Transverse colon (tissue), 4 donors: ENCODE measurements at regions of chr19 and their contacts with region 1.

Region 1: DNA sequence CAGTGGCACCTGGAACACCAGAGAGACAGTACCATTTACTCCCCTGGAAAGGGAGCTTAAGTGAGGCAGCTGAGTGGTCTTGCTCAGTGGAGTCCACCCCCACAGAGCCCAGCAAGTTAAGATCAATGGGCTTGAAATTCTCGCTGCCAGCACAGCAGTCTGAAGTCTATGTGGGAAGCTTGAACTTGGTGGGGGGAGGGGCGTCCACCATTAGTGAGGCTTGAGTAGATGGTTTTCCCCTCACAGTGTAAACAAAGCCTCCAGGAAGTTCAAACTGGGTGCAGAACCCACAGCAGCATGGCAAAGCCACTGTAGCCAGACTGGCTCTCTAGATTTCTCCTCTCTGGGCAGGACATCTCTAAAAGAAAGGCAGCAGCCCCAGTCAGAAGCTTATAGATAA is 30.3 kb upstream of the CEACAM4 start:
- DNase-seq: no peak
- H3K4me3 ChIP-seq: no peak overlapping the region
- H3K27ac ChIP-seq: no peak overlapping the region
- H3K4me1 ChIP-seq: no peaks in the 10 kb centered on the region
- H3K27me3 ChIP-seq: peaks cover 69% of the 10 kb centered on the region
- CTCF ChIP-seq: no peak
- EP300 ChIP-seq: no peak
- POLR2A ChIP-seq: no peak

Region 2: GRCh38 chr19:41626877-41627276 is 30.3 kb before region 1 on chr19 and contains the start of gene CEACAM4:
- in situ Hi-C with region 1: no loop called
- intact Hi-C with region 1: no loop called
- DNase-seq: no peak
- H3K4me3 ChIP-seq: peak within 1 kb of the TSS in 1 of 4 donors; percentile 13
- H3K27ac ChIP-seq: no peak within 1 kb of the TSS
- H3K4me1 ChIP-seq: no peaks in the 10 kb centered on the region
- H3K27me3 ChIP-seq: peaks cover 21% of the 10 kb centered on the region
- CTCF ChIP-seq: no peak
- EP300 ChIP-seq: no peak
- POLR2A ChIP-seq: peak; percentile 29
- total RNA-seq, gene CEACAM4: 0.48 to 1.5 TPM in 2 of 4 donors, not detected in the others

Region 3: DNA sequence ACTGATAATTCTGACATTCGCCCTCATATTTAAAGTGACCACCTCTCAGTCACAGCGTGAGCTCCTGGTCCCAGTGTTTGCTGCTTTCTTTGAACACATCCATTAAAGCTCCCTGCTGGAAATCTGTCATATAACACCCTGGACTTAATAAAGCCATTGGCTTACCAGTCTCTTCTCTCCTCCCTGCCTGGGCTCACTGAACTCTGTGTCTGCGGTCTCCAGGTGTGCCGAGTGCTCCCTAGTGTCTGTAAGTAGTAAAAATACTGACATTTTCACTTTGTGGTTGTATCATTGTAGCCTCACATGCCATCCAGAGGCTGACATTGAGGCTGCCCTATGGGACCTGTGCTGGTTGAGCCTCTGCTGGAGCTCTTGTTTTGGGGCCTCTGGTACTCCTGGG is 1371.7 kb after region 1 on chr19:
- in situ Hi-C with region 1: no loop called
- intact Hi-C with region 1: loop called (anchors 5 kb)
- DNase-seq: no peak
- H3K4me3 ChIP-seq: no peak overlapping the region
- H3K27ac ChIP-seq: no peak overlapping the region
- H3K4me1 ChIP-seq: no peaks in the 10 kb centered on the region
- H3K27me3 ChIP-seq: no peaks in the 10 kb centered on the region
- CTCF ChIP-seq: no peak
- EP300 ChIP-seq: no peak
- POLR2A ChIP-seq: no peak